Naive thymus-derived CD4-positive, alpha-beta T cell (primary cell): ENCODE measurements at regions of chr16 and their contacts with region 1.

Region 1: DNA sequence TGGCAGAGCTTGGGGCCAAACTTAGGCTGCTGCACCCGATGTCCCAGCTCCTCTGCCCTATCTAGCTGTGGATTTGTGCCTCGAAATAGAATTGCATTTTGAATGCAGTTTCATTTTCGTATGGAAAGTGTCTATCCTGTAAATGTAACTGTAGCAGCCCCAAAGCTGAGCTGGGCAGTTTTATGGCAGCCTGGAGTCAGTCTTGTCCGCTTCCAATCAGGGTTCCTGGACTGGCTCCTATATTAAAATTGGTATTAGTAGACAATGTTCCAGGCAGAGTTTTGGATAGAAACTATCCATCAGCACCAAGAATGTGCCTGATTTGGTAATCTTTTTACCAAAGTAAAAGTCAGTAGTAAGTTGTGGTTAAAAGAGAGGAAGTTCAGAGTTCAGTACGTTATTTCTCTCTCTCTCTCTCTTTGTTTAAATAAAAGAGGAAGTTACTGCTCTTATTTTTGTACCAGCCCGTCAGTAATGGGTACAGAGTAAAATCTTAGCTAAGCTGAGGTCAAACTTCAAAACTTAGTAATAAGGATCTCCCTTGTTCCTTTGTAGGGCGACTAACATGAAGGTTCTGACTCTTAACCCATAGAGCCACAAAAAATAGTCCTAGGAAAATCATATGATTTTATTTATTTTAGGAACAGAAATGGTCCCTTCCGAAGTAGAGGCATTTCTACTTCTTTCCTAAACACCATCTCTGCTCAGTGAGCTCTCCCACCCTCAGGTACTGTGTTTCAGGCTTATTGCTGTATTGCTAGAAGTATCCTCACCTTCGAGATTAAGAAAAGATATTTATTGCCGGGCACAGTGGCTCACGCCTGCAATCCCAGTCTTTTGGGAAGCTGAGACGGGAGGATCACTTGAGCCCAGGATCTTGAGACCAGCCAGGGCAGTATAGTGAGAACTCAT is 28.0 kb downstream of the PRKCB start:
- DNase-seq: peak in 7 of 9 donors; percentile 24 to 70 (median 67)
- ATAC-seq: peak; percentile 92
- H3K4me3 ChIP-seq: peak overlapping the region; percentile 59
- H3K4me3 Mint-ChIP-seq: peak overlapping the region; percentile 84 to 92 (median 89)
- H3K27ac ChIP-seq: peak overlapping the region; percentile 61
- H3K27ac Mint-ChIP-seq: peak overlapping the region; percentile 87 to 95 (median 93)
- H3K4me1 ChIP-seq: peaks cover 43 to 69% of the 10 kb centered on the region in 2 donors
- H3K4me1 Mint-ChIP-seq: peaks cover 63 to 96% (median 87%) of the 10 kb centered on the region in 7 donors
- H3K27me3 ChIP-seq: no peaks in the 10 kb centered on the region
- H3K27me3 Mint-ChIP-seq: no peaks in the 10 kb centered on the region

Region 2: DNA sequence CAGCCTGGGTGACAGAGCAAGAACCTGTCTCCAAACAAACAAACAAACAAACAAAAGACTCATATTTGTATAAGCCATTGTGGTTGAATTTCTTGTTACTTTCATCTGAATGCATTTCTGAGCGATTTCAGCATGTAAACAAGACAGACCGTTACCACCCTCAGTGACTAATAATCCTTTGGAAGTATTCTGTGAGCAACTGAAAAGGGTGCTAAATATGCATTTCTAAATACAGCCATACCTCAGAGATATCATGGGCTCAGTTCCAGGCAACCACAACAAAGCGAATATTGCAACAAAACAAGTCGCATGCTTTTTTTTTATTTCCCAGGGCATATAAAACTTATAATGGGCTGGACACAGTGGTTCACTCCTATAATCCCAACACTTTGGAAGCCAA is 823.5 kb before region 1 on chr16:
- CTCF ChIA-PET with region 1: no interaction called
- POLR2A ChIA-PET with region 1: no interaction called
- intact Hi-C with region 1: no loop called
- DNase-seq: no peak
- ATAC-seq: no peak
- H3K4me3 ChIP-seq: no peak overlapping the region
- H3K4me3 Mint-ChIP-seq: no peak overlapping the region
- H3K27ac ChIP-seq: no peak overlapping the region
- H3K27ac Mint-ChIP-seq: no peak overlapping the region
- H3K4me1 ChIP-seq: no peaks in the 10 kb centered on the region
- H3K4me1 Mint-ChIP-seq: no peaks in the 10 kb centered on the region
- H3K27me3 ChIP-seq: no peaks in the 10 kb centered on the region
- H3K27me3 Mint-ChIP-seq: peaks cover 0 to 24% (median 24%) of the 10 kb centered on the region in 5 donors

Region 3: DNA sequence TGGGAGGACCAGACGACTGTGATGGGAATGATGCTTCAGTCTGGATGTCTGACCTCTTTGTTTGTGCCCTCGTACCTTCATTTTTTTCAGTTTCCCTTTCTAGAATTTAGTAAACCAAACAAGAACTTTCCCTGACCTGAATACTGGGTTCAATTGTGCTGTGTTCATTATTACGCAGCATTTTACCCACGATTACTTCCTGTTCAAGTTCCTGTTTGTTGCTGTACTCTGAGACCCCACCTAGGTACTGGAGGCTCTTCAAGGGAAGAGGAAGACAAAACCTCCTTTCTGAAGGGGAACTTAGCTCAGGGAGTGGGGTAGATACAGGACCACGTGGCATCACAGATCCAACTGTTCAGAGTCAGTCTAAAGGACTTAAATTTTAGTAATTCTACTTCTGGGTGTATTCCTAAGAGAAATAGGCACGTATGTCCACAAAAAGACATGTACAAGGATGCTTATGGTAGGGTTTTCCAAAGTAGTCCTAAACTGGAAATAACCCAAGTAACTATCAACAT is 37.2 kb before region 1 on chr16:
- CTCF ChIA-PET with region 1: interaction called, 3 read pairs
- POLR2A ChIA-PET with region 1: interaction called, 6 read pairs
- intact Hi-C with region 1: loop called (anchors 1 to 5 kb)
- DNase-seq: peak in 7 of 9 donors; percentile 48 to 76 (median 62)
- ATAC-seq: peak; percentile 94
- H3K4me3 ChIP-seq: peak overlapping the region; percentile 8
- H3K4me3 Mint-ChIP-seq: peak overlapping the region; percentile 35 to 87 (median 69)
- H3K27ac ChIP-seq: peak overlapping the region; percentile 31
- H3K27ac Mint-ChIP-seq: peak overlapping the region; percentile 54 to 94 (median 88)
- H3K4me1 ChIP-seq: peaks cover 22 to 23% of the 10 kb centered on the region in 2 donors
- H3K4me1 Mint-ChIP-seq: peaks cover 31 to 44% (median 35%) of the 10 kb centered on the region in 7 donors
- H3K27me3 ChIP-seq: no peaks in the 10 kb centered on the region
- H3K27me3 Mint-ChIP-seq: peaks cover 0 to 3% (median 0%) of the 10 kb centered on the region in 5 donors

Region 4: DNA sequence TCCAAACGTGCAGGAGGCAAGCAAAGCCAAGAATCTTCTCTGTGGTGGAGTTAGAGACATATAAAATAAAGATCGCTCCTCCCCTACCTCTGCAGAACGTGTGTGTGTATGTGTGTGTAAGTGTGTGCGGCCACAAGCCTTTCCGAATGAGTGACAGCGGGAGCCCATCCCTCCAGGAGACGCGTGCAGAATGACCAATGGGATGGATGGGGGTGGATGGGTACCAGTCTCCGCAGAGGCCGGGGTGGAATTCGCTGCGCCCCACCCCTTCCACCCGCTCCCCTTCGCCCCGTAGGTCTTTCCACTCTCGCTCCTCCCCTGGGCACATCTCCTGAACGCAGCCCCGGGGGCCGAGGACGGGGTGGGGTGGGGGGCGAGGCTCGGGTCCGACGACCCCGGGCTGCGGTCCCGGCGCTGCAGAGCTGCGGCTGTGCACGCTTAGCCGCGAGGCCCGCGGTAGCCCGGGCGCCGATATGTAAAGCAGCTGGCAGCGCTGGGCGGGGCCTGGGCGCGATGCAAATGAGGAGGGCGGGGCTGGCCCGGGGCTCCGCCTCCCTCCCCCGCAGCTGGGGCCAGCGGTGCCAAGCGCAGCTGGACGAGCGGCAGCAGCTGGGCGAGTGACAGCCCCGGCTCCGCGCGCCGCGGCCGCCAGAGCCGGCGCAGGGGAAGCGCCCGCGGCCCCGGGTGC is 28.2 kb before region 1 on chr16 and contains the start of gene PRKCB:
- CTCF ChIA-PET with region 1: interaction called, 3 read pairs
- POLR2A ChIA-PET with region 1: interaction called, 7 read pairs
- intact Hi-C with region 1: loop called (anchors 1 kb)
- DNase-seq: peak; percentile 83 to 98 (median 90)
- ATAC-seq: peak; percentile 97
- H3K4me3 ChIP-seq: peak within 1 kb of the TSS; percentile 65
- H3K4me3 Mint-ChIP-seq: peak within 1 kb of the TSS; percentile 88 to 100 (median 98)
- H3K27ac ChIP-seq: peak within 1 kb of the TSS; percentile 65
- H3K27ac Mint-ChIP-seq: peak within 1 kb of the TSS; percentile 69 to 95 (median 85)
- H3K4me1 ChIP-seq: peaks cover 25 to 35% of the 10 kb centered on the region in 2 donors
- H3K4me1 Mint-ChIP-seq: peaks cover 52 to 65% (median 60%) of the 10 kb centered on the region in 7 donors
- H3K27me3 ChIP-seq: no peaks in the 10 kb centered on the region
- H3K27me3 Mint-ChIP-seq: peaks cover 0 to 3% (median 0%) of the 10 kb centered on the region in 5 donors
- total RNA-seq, gene PRKCB: 72.5 to 180 (median 73.1) TPM

Region 5: GRCh38 chr16:23847948-23848347 is 15.8 kb before region 1 on chr16:
- CTCF ChIA-PET with region 1: interaction called, 4 read pairs
- POLR2A ChIA-PET with region 1: interaction called, 5 read pairs
- intact Hi-C with region 1: loop called in 1 of 2 experiments (anchors 2 kb)
- DNase-seq: peak in 8 of 9 donors; percentile 52 to 76 (median 66)
- ATAC-seq: peak; percentile 99
- H3K4me3 ChIP-seq: peak overlapping the region; percentile 5
- H3K4me3 Mint-ChIP-seq: peak overlapping the region; percentile 37 to 78 (median 42)
- H3K27ac ChIP-seq: peak overlapping the region; percentile 19
- H3K27ac Mint-ChIP-seq: peak overlapping the region; percentile 17 to 89 (median 78)
- H3K4me1 ChIP-seq: peaks cover 34 to 35% of the 10 kb centered on the region in 2 donors
- H3K4me1 Mint-ChIP-seq: peaks cover 59 to 90% (median 77%) of the 10 kb centered on the region in 7 donors
- H3K27me3 ChIP-seq: no peaks in the 10 kb centered on the region
- H3K27me3 Mint-ChIP-seq: no peaks in the 10 kb centered on the region

Region 6: DNA sequence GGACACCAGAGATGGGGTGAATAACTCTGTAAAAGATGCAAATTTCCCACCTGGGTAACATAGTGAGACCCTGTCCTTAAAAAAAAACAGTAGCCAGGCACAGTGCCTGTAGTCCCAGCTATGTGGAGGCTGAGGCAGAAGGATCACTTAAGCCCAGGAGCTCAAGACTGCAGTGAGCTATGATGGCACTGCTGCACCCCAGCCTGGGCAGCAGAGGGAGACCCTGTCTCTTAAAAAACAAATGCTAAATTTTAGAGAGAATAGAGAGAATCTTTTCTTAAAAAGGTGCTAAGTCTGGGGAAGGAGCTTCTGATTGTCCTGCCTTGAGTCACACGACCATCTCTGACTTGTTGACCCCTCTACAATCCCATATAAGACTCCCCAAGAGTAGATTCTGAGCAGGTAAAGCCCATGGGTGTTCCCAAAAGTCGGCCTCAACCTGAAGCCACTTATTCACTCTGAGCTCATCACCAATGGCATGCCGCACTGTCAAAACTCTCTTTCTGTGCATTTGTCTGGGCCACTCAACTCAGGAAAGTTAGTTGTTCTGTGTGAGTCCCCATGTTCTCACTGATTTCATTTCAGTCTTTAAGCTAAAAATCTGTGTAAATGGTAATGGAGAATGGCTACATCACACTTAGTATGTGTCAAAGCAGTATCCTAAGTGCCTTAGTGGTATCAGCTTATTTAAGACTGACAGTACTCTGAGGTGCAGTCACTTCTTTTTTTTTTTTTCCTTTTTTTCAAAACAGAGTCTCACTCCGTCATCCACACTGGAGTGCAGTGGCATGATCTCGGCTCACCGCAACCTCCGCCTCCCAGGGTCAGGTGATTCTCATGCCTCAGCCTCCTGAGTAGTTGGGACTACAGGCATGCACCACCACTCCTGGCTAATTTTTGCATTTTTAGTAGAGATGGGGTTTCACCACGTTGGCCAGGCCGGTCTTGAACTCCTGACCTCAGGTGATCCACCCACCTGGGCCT is 13.6 kb after region 1 on chr16:
- CTCF ChIA-PET with region 1: interaction called, 6 read pairs
- POLR2A ChIA-PET with region 1: interaction called, 7 read pairs
- intact Hi-C with region 1: loop called in 1 of 2 experiments (anchors 1 kb)
- DNase-seq: peak in 5 of 9 donors; percentile 31 to 43 (median 35)
- ATAC-seq: peak; percentile 43
- H3K4me3 ChIP-seq: no peak overlapping the region
- H3K4me3 Mint-ChIP-seq: peak overlapping the region in 1 of 10 donors; percentile 1
- H3K27ac ChIP-seq: no peak overlapping the region
- H3K27ac Mint-ChIP-seq: peak overlapping the region in 6 of 9 donors; percentile 10 to 93 (median 74)
- H3K4me1 ChIP-seq: peaks cover 26 to 27% of the 10 kb centered on the region in 2 donors
- H3K4me1 Mint-ChIP-seq: peaks cover 53 to 77% (median 71%) of the 10 kb centered on the region in 7 donors
- H3K27me3 ChIP-seq: no peaks in the 10 kb centered on the region
- H3K27me3 Mint-ChIP-seq: no peaks in the 10 kb centered on the region

Region 7: DNA sequence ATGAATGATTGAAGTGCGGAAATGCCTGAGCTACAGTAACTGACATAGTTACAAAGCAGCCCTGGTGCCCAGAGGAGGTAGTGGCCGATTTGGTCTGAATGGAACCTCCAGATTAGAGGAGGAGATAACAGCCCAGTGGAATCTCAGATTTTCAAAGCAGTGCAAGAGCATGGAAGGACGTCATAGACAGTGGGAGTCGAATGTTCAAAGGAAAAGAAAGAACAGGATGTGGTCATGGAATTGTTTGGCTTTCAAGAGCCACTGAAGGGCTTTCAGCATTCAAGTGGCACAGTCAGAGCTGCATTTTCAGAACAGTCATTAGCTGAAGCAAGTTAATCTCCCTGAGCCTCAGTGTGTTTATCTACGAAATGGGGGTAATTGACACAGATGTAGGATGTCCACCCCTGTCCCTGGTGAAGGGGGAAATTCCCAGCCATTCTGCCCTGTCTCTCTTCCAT is 287.7 kb after region 1 on chr16:
- CTCF ChIA-PET with region 1: no interaction called
- POLR2A ChIA-PET with region 1: no interaction called
- intact Hi-C with region 1: no loop called
- DNase-seq: peak in 8 of 9 donors; percentile 24 to 66 (median 58)
- ATAC-seq: peak; percentile 81
- H3K4me3 ChIP-seq: no peak overlapping the region
- H3K4me3 Mint-ChIP-seq: peak overlapping the region; percentile 24 to 90 (median 71)
- H3K27ac ChIP-seq: no peak overlapping the region
- H3K27ac Mint-ChIP-seq: peak overlapping the region; percentile 11 to 81 (median 67)
- H3K4me1 ChIP-seq: peaks cover 0 to 16% of the 10 kb centered on the region in 2 donors
- H3K4me1 Mint-ChIP-seq: peaks cover 25 to 58% (median 51%) of the 10 kb centered on the region in 7 donors
- H3K27me3 ChIP-seq: no peaks in the 10 kb centered on the region
- H3K27me3 Mint-ChIP-seq: no peaks in the 10 kb centered on the region